ENCODE measurements at regions of chr2 and their contacts with region 1.

Region 1: DNA sequence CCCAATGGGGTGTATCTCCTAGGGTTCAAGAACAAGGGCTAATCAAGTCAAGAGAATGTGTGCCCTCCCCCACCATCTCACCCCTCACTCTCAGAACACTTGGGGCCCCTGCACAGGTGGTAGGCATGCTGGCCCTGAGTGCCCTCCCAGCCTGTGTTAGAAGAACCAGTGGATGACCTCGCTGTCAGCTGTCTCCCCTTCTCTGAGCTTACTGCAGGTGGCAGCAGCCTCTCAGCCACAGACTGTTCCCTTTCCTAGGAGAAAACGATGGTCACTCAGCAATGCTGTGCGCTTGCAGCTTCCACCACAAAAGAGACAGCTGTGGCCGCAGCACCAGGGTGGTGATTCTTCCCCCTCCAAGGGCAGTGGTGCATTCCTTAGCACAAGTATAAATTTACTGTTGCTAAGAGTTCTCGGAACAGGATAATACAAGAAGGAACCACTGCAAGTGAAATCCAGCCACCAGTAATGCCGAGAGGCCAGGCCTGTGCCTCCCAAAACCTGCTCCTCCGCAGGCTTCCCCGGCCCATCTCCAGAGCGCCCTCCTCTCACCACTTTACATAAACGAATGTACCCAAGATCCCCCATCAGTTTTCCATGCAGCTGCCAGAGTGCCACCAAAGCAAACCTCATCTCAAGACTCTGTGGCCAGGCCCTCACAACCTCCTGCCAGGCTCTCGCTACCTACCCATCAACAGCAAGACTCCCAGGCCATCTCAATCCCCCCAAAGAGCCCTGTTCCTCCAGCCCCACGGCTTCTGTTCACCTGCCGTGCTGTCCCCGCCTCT is 935 bp upstream of the RAMP1 start:
- DNase-seq: peak; percentile 65 to 80 (median 67)
- ATAC-seq: peak; percentile 77 to 85 (median 81)
- H3K4me3 ChIP-seq: peak overlapping the region in 8 of 12 donors; percentile 51 to 71 (median 62)
- H3K27ac ChIP-seq: peak overlapping the region in 11 of 12 donors; percentile 79 to 97 (median 90)
- H3K4me1 ChIP-seq: peaks cover 0 to 33% (median 10%) of the 10 kb centered on the region in 12 donors
- H3K27me3 ChIP-seq: peaks cover 0 to 32% (median 0%) of the 10 kb centered on the region in 9 donors
- CTCF ChIP-seq: peak; percentile 61 to 78 (median 71)
- POLR2A ChIP-seq: no peak

Region 2: DNA sequence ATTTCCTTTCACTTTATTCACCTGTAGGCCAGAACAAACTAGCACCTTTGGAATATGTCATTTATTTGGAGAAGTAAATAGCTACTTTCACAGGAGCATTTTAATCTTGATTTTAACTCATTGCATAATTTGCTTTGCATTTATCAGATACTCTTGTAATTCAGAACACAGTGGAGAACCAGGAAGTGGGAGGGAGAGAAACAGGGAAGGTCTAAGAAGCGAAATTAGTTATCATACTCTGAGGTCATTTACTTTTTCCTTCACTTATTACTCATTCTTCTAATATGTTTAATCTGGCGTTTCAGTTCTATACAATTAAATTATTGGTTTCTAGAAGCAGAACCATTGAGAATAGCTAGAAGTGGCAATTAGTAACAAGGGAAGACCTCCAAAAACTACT is 39.3 kb before region 1 on chr2:
- intact Hi-C with region 1: no loop called
- DNase-seq: no peak
- ATAC-seq: no peak
- H3K4me3 ChIP-seq: no peak overlapping the region
- H3K27ac ChIP-seq: no peak overlapping the region
- H3K4me1 ChIP-seq: peaks cover 0 to 4% (median 0%) of the 10 kb centered on the region in 12 donors
- H3K27me3 ChIP-seq: no peaks in the 10 kb centered on the region
- CTCF ChIP-seq: no peak
- POLR2A ChIP-seq: no peak

Region 3: DNA sequence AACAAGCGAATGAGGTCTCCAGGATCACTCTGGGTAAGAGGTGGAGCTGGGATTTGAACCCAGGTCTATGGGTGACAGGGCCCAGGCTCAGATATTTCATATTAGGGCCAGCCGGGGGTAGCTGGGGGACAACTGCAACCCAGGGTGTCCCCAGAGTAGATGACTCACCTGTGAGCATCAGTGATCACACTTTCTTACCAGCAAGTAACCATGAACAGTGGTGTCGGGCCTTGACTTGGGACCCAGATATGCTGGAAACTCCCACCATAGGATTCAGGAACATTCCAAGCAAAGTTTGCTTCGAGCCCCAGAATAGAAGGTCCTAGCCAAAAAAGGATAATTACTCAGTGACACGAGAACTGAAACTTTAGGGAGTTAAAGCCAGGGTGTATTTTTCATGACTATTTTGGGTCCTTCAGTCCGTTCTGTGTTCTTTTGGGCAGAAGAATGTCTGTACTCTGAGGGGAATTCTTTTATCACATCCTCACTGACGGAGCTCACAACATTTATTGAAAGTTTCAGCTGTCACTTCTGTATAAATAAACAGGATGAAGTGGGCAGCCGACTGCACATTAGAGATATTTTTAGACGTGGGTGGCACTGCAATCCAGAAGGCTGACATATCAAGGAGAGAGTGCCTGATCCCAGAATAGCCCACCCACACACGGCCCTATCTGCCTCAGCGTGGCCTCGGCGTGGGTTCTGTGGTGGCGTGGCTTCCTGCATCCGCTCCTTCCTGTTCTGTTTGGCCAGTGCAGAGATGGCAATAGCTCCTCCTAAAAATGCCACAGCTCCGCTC is 46.5 kb after region 1 on chr2:
- intact Hi-C with region 1: loop called in 6 of 10 experiments (anchors 2 to 5 kb)
- DNase-seq: peak in 4 of 5 donors; percentile 78 to 89 (median 83)
- ATAC-seq: peak; percentile 87 to 92 (median 88)
- H3K4me3 ChIP-seq: no peak overlapping the region
- H3K27ac ChIP-seq: peak overlapping the region; percentile 76 to 97 (median 90)
- H3K4me1 ChIP-seq: peaks cover 0 to 35% (median 13%) of the 10 kb centered on the region in 12 donors
- H3K27me3 ChIP-seq: no peaks in the 10 kb centered on the region
- CTCF ChIP-seq: no peak
- POLR2A ChIP-seq: peak; percentile 3 to 49

Region 4: GRCh38 chr2:238009563-238009962 is 151.1 kb after region 1 on chr2:
- intact Hi-C with region 1: loop called in 1 of 10 experiments (anchors 10 kb)
- DNase-seq: no peak
- ATAC-seq: no peak
- H3K4me3 ChIP-seq: no peak overlapping the region
- H3K27ac ChIP-seq: no peak overlapping the region
- H3K4me1 ChIP-seq: peaks cover 0 to 9% (median 0%) of the 10 kb centered on the region in 12 donors
- H3K27me3 ChIP-seq: no peaks in the 10 kb centered on the region
- CTCF ChIP-seq: no peak
- POLR2A ChIP-seq: no peak

Region 5: GRCh38 chr2:238060542-238061314 is 202.2 kb after region 1 on chr2 and contains the start of gene SCLY:
- intact Hi-C with region 1: loop called in 1 of 10 experiments (anchors 5 kb)
- DNase-seq: peak; percentile 98 to 99 (median 98)
- ATAC-seq: peak; percentile 99 to 100 (median 100)
- H3K4me3 ChIP-seq: peak within 1 kb of the TSS; percentile 64 to 95 (median 88)
- H3K27ac ChIP-seq: peak within 1 kb of the TSS; percentile 70 to 95 (median 88)
- H3K4me1 ChIP-seq: peaks cover 0 to 22% (median 14%) of the 10 kb centered on the region in 12 donors
- H3K27me3 ChIP-seq: no peaks in the 10 kb centered on the region
- CTCF ChIP-seq: no peak
- POLR2A ChIP-seq: peak; percentile 86 to 88
- total RNA-seq, gene SCLY: 8.1 to 14.3 (median 10.6) TPM

Region 6: DNA sequence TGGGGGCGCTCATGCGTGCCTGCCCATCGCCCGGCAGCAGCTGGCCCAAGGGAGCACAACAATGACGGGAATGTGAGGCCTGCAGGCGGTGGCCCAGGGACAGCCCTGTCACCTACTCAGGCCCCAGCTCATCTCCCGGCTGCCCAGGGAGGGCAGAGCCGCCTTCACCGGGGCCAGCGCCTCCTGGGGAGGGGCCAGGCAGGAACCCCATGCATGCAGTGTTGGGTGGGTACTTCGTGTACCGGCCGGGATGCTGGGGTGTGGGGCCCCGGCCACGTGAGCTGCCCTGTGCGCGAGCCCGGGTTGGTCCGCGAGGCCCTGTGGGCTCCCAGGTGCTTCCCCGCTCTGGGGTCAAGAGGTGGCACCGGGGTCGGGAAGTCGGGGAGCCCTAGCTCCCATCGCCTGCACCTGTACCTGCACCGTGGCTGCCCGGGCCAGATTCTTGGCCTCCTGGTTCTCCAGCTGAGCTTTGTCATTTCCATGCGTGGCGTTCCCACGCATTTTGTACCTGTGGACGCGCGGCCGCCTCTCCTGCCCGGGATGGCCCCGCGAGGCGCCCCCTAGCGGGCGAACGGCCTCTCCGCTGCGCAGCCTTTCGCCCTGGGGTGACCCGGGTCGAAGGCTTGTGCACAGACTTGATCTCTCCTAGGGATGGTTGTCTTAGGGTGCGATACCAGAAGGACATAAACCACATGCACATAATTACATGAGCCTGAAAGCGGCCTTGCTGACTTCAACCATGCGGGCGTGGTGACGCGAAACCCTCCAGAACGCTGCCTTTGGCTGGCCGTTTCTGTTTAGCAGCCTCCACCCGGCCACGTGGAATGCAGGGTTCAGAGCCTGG is 280.9 kb after region 1 on chr2:
- intact Hi-C with region 1: loop called in 7 of 10 experiments (anchors 1 to 10 kb)
- DNase-seq: peak in 1 of 5 donors; percentile 55
- ATAC-seq: peak; percentile 27 to 51 (median 40)
- H3K4me3 ChIP-seq: peak overlapping the region in 11 of 12 donors; percentile 22 to 56 (median 45)
- H3K27ac ChIP-seq: peak overlapping the region; percentile 73 to 96 (median 86)
- H3K4me1 ChIP-seq: peaks cover 0 to 65% (median 32%) of the 10 kb centered on the region in 12 donors
- H3K27me3 ChIP-seq: no peaks in the 10 kb centered on the region
- CTCF ChIP-seq: peak in 11 of 12 donors; percentile 52 to 74 (median 62)
- POLR2A ChIP-seq: no peak

Region 7: GRCh38 chr2:238263204-238264071 is 404.9 kb after region 1 on chr2:
- intact Hi-C with region 1: loop called (anchors 1 to 10 kb)
- DNase-seq: peak; percentile 87 to 94 (median 92)
- ATAC-seq: peak; percentile 64 to 92 (median 84)
- H3K4me3 ChIP-seq: no peak overlapping the region
- H3K27ac ChIP-seq: peak overlapping the region in 11 of 12 donors; percentile 22 to 73 (median 51)
- H3K4me1 ChIP-seq: peaks cover 0 to 38% (median 24%) of the 10 kb centered on the region in 12 donors
- H3K27me3 ChIP-seq: no peaks in the 10 kb centered on the region
- CTCF ChIP-seq: peak; percentile 74 to 88 (median 81)
- POLR2A ChIP-seq: no peak